CD8-positive, alpha-beta T cell (primary cell): ENCODE measurements at regions of chr14 and their contacts with region 1.

Region 1: DNA sequence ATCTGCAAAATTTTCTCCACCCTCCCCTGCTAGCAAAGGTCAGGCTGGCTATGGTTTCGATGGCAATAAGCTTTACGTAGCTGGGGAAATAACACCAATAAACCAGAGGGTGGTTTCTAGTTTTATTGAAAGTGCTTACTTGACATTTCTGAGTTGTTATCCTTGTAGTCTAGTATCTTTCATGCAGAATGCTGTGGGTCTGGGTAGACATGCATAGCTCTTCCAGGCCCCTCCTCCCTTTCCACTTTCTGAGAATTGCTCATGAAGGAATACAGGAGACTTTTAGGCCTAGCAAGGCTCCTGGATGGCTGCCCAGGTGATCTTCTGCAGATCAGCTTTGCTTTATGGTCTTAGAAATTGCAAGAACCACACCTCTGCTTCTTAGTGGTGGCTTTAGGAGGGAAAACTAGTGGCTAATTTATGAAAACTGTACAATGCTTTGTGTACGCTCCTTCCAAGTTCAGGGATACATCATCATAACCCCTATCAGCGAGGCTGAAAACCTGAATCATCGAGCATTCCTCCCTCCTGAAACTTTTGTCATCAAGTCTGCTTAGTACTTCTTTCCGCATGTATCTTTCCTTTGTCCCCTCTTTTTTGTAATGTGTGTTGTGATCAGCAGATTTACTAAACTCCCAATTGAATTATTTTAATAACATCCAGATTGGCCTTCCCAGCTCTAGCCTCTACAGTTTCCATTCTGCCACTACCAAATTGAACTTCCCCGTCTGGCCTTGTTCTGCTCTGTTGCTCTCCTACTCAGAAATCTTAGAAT is 473.0 kb downstream of the RAD51B start:
- DNase-seq: no peak
- ATAC-seq: no peak
- H3K4me3 ChIP-seq: no peak overlapping the region
- H3K4me3 Mint-ChIP-seq: peak overlapping the region; percentile 13
- H3K27ac ChIP-seq: no peak overlapping the region
- H3K27ac Mint-ChIP-seq: peak overlapping the region; percentile 89
- H3K4me1 ChIP-seq: peaks cover 38% of the 10 kb centered on the region
- H3K4me1 Mint-ChIP-seq: peaks cover 57% of the 10 kb centered on the region
- H3K27me3 ChIP-seq: no peaks in the 10 kb centered on the region
- H3K27me3 Mint-ChIP-seq: no peaks in the 10 kb centered on the region
- CTCF ChIP-seq: no peak

Region 2: GRCh38 chr14:68369281-68370056 is 76.8 kb after region 1 on chr14:
- CTCF ChIA-PET with region 1: interaction called, 4 read pairs
- POLR2A ChIA-PET with region 1: no interaction called
- intact Hi-C with region 1: loop called in 1 of 2 experiments (anchors 5 kb)
- DNase-seq: no peak
- ATAC-seq: no peak
- H3K4me3 ChIP-seq: no peak overlapping the region
- H3K4me3 Mint-ChIP-seq: peak overlapping the region; percentile 63
- H3K27ac ChIP-seq: no peak overlapping the region
- H3K27ac Mint-ChIP-seq: peak overlapping the region; percentile 74
- H3K4me1 ChIP-seq: peaks cover 27% of the 10 kb centered on the region
- H3K4me1 Mint-ChIP-seq: peaks cover 53% of the 10 kb centered on the region
- H3K27me3 ChIP-seq: no peaks in the 10 kb centered on the region
- H3K27me3 Mint-ChIP-seq: no peaks in the 10 kb centered on the region
- CTCF ChIP-seq: no peak